ENCODE measurements at regions of chr19 and their contacts with region 1.

Region 1: GRCh38 chr19:2050991-2051772 is at the start of gene MKNK2:
- DNase-seq: peak; percentile 97
- CTCF ChIP-seq: peak; percentile 71

Region 2: GRCh38 chr19:2061495-2062381 is 10.6 kb after region 1 on chr19:
- CTCF ChIA-PET with region 1: interaction called, 11 read pairs
- POLR2A ChIA-PET with region 1: interaction called, 13 read pairs
- DNase-seq: peak; percentile 99
- CTCF ChIP-seq: peak; percentile 9

Region 3: DNA sequence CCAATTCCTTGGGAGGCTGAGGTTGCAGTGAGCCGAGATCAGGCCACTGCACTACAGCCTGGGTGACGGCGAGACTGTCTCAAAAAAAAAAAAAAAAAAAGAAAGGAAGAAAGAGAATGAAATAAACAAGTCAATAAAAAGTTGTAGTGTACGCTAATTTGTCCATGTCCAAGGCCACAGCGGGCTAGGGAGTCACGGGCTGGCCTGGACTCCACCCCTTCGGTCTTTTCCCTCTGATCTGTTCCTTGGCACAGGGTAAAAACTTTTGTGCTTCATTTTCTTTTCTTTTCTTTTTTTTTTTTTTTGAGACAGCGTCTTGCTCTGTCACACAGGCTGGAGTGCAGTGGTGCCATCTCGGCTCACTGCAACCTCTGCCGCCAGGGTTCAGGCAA is 19.2 kb after region 1 on chr19:
- CTCF ChIA-PET with region 1: interaction called, 13 read pairs
- POLR2A ChIA-PET with region 1: interaction called, 3 read pairs
- DNase-seq: no peak
- CTCF ChIP-seq: no peak

Region 4: DNA sequence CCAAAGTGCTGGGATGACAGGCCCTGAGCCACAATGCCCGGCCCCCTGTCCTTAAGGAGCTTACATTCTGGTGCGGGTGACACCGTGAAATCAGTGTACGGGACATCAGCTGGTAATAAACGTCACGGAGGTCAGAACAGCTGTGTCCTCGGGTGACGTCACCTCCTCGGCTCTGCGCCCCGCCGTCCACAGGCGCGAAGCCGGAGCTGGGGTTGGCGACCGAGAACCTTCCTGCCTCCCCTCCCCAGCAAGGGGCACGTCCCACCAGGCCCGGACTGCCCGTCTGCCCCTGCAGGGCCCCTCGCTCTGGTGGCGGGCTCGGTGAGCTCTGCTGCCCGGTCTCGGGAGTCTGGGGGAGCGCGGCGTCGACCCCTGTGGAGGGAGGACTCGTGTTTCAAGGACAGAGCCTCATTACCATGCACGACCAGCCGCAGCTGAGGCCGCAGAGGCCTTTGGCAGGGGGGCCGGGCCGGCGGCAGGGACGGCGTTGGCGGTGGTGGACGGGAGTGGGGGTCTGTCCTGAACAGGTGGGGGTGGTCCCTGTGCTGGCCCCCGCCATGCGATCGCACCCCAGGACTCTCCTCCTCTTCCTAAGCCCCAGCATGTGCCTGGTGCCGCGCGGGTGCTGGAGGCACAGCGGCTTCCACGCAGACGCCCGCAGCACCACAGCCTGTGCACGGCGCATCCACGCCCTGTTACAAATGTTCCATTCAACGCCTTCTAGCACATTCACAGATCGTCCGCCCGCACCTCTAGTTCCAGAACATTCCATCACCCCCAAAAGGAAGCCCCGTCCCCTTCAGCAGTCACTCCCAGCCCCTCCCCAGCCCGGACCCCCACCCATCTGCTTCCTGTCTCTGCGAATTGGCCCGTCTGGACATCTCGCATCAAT is 251.4 kb after region 1 on chr19:
- CTCF ChIA-PET with region 1: no interaction called
- POLR2A ChIA-PET with region 1: no interaction called
- DNase-seq: no peak
- CTCF ChIP-seq: no peak